Heart left ventricle (tissue), 16 donors: ENCODE measurements at regions of chr9 and their contacts with region 1.

Region 1: DNA sequence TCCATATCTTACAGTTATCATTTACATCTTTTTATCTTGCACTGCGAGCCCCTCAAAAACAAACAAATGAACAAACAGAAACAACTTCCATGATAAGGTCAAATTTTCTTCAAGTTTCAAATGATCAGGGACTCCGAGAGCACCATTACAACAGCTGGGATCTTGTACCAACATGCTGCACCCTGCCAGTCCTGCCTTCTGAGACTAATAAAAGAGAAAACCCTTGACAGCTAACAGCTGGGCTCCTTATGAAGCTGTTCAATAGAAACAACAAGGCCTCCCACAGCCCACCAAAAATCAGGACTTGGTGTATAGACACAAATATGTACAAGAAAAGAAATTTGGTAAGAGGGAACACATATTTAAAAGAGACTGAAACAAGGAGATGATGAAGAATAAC is 985.3 kb upstream of the DMAC1 start:
- DNase-seq: peak in 1 of 5 donors; percentile 25
- ATAC-seq: no peak
- H3K4me3 ChIP-seq: peak overlapping the region in 3 of 12 donors; percentile 1 to 33 (median 27)
- H3K27ac ChIP-seq: peak overlapping the region in 2 of 12 donors; percentile 49 to 54
- H3K4me1 ChIP-seq: peaks cover 0 to 4% (median 0%) of the 10 kb centered on the region in 12 donors
- H3K27me3 ChIP-seq: no peaks in the 10 kb centered on the region
- CTCF ChIP-seq: no peak
- POLR2A ChIP-seq: no peak

Region 2: GRCh38 chr9:8437876-8438275 is 347.0 kb before region 1 on chr9:
- intact Hi-C with region 1: loop called in 1 of 10 experiments (anchors 5 kb)
- DNase-seq: no peak
- ATAC-seq: no peak
- H3K4me3 ChIP-seq: no peak overlapping the region
- H3K27ac ChIP-seq: no peak overlapping the region
- H3K4me1 ChIP-seq: peaks cover 0 to 3% (median 0%) of the 10 kb centered on the region in 12 donors
- H3K27me3 ChIP-seq: no peaks in the 10 kb centered on the region
- CTCF ChIP-seq: no peak
- POLR2A ChIP-seq: no peak

Region 3: GRCh38 chr9:8733131-8733954 is 51.5 kb before region 1 on chr9:
- intact Hi-C with region 1: no loop called
- DNase-seq: peak; percentile 18 to 64 (median 40)
- ATAC-seq: peak in 3 of 4 donors; percentile 52 to 71 (median 63)
- H3K4me3 ChIP-seq: peak overlapping the region in 10 of 12 donors; percentile 6 to 50 (median 28)
- H3K27ac ChIP-seq: peak overlapping the region in 1 of 12 donors; percentile 8
- H3K4me1 ChIP-seq: peaks cover 0 to 7% (median 0%) of the 10 kb centered on the region in 12 donors
- H3K27me3 ChIP-seq: no peaks in the 10 kb centered on the region
- CTCF ChIP-seq: no peak
- POLR2A ChIP-seq: no peak

Region 4: GRCh38 chr9:8764051-8764450 is 20.8 kb before region 1 on chr9:
- intact Hi-C with region 1: loop called in 1 of 10 experiments (anchors 1 kb)
- DNase-seq: no peak
- ATAC-seq: no peak
- H3K4me3 ChIP-seq: no peak overlapping the region
- H3K27ac ChIP-seq: no peak overlapping the region
- H3K4me1 ChIP-seq: no peaks in the 10 kb centered on the region
- H3K27me3 ChIP-seq: no peaks in the 10 kb centered on the region
- CTCF ChIP-seq: no peak
- POLR2A ChIP-seq: no peak

Region 5: DNA sequence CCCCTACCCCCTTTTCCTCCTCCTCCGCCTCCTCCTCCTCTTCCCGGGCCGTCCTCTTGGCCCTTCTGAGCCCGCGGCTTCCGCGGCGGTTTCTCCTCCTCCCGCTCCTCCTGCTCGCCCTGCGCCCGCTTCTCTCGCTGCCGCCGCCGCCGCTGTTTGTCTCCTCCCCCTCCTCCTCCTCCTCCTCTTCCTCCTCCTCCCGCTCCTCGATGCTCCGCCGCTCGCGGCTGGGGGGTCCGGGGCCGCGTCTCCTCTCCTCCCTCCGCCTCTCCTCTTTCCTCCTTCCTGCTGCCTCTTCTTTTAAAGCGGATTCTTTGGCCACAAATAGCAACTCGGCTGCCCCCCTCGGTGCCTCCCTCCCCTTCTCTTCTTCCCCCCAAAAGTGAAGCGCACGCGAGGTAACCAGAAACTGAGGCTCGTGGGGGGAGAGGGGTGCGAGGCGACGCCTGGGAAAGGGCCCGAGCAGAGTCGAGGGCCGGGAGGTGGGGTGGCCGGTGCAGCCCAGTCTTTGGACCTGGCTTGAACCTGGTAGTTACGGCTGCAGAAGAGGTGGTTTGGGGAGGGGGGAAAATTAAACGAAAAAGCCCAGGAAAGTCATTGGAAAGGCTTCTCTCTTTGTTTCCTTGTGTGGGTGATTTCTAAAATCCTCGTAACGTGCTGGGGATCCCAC is 73.2 kb after region 1 on chr9:
- intact Hi-C with region 1: no loop called
- DNase-seq: peak; percentile 59 to 83 (median 73)
- ATAC-seq: peak; percentile 30 to 86 (median 83)
- H3K4me3 ChIP-seq: peak overlapping the region; percentile 59 to 89 (median 66)
- H3K27ac ChIP-seq: peak overlapping the region in 6 of 12 donors; percentile 44 to 63 (median 54)
- H3K4me1 ChIP-seq: peaks cover 0 to 19% (median 3%) of the 10 kb centered on the region in 12 donors
- H3K27me3 ChIP-seq: peaks cover 0 to 40% (median 0%) of the 10 kb centered on the region in 9 donors
- CTCF ChIP-seq: no peak
- POLR2A ChIP-seq: no peak

Region 6: GRCh38 chr9:8946461-8946860 is 161.6 kb after region 1 on chr9:
- intact Hi-C with region 1: no loop called
- DNase-seq: no peak
- ATAC-seq: no peak
- H3K4me3 ChIP-seq: no peak overlapping the region
- H3K27ac ChIP-seq: no peak overlapping the region
- H3K4me1 ChIP-seq: no peaks in the 10 kb centered on the region
- H3K27me3 ChIP-seq: no peaks in the 10 kb centered on the region
- CTCF ChIP-seq: no peak
- POLR2A ChIP-seq: no peak

Region 7: DNA sequence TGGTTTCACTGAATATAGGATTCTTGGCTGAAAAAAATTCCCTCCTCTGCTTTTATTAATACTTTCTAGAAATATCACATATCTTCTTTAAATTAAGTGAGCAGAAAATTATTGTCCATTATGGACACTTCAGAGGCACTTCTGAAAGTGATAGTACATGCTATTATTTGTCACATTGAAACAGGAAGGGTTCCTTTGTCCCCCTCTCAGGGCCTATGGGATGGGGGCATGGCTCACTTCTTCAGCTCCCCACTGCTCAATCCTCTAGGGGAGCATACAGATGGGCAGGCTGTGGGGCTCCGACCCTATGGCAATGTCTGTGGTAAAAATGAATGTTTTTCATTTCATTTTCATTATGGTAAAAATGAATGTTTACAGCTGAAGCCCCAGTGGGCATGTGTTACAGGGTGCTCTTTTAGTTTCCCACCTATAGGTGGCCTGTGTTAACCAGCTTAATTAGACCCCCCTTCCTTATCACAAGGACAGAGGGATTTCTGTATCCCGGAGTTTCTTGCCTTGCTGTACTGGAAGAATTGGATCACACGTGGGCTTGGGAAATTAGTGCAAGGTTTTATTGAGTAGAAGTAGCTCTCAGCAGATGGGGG is 602.8 kb after region 1 on chr9:
- intact Hi-C with region 1: no loop called
- DNase-seq: no peak
- ATAC-seq: no peak
- H3K4me3 ChIP-seq: no peak overlapping the region
- H3K27ac ChIP-seq: no peak overlapping the region
- H3K4me1 ChIP-seq: no peaks in the 10 kb centered on the region
- H3K27me3 ChIP-seq: no peaks in the 10 kb centered on the region
- CTCF ChIP-seq: no peak
- POLR2A ChIP-seq: no peak